ENCODE measurements at regions of chr15 and their contacts with region 1.

Region 1: DNA sequence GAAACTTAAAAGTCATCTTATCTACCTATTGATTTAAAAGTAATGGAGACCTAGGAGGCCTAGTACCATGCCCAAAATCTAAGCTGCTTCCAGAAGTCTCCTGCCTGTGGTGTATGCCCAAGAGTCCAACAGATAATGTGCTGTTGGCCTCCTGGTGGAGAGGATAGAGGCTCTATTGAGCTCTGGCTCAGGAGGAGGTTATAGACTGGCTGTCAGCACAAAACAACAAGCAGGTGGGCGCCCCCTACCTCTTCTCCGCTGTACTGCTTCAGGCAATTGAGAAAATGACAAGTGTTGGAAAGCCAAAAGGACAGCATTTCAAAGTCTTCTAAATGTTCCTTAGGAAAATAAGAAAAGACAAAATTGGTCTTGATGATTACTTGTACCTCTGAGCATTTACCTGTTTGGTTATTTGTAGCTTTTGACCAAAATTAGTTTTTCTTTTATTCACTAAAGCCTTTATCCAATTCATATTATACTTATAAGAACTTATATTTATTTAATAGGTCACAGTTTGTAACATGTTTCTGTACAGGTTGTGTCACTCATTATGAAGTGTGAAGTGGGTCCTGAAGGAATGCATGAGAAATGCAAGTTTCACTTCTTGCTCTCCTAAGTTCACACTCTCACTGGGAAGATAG is 17.2 kb upstream of the GNB5 start:
- DNase-seq: no peak
- ATAC-seq: peak; percentile 86
- H3K4me3 ChIP-seq: no peak overlapping the region
- H3K27ac ChIP-seq: no peak overlapping the region
- H3K4me1 ChIP-seq: no peaks in the 10 kb centered on the region
- H3K27me3 ChIP-seq: no peaks in the 10 kb centered on the region
- CTCF ChIP-seq: peak; percentile 86

Region 2: GRCh38 chr15:52227456-52227855 is 19.0 kb after region 1 on chr15:
- CTCF ChIA-PET with region 1: interaction called, 10 read pairs
- POLR2A ChIA-PET with region 1: no interaction called
- in situ Hi-C with region 1: no loop called
- intact Hi-C with region 1: no loop called
- DNase-seq: peak; percentile 88
- ATAC-seq: peak; percentile 98
- H3K4me3 ChIP-seq: no peak overlapping the region
- H3K27ac ChIP-seq: no peak overlapping the region
- H3K4me1 ChIP-seq: no peaks in the 10 kb centered on the region
- H3K27me3 ChIP-seq: no peaks in the 10 kb centered on the region
- CTCF ChIP-seq: peak; percentile 91